ENCODE measurements at regions of chr18 and their contacts with region 1.

Region 1: DNA sequence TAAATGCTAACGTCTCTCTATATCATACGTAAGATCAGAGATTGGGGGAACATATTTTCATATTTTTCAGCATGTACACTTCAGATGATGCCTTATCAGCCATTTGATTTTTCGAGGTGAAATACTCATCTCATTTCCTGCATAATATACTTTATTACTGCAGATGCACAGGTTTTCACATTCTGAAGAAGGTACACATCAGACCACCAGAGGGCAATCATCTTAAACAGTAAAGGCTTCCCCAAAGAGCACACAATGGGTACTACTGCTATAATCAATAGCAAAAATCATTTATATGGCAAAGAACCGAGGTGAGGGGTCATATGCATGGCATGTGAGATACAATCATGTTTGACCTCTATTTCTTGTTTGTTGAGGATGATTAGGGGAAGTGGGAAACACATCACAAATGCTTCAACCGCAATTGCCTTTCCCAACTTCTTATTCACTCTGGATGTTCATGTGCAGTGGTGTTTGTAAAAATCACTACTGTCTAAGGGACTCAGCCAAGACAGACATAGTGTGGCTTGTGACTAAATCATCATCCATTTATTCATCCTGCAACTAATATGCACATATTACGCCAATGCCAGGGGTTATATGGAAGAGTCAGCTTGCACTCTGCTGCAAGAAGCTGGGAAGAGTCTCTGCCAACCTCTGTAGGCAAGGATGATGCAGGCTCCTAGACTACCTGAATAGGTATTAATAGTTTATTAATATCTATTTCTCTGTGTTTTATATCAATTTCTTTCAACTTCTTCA is 118.7 kb downstream of the EPB41L3 start:
- DNase-seq: peak; percentile 49
- H3K4me3 ChIP-seq: no peak overlapping the region
- H3K27ac ChIP-seq: no peak overlapping the region
- H3K4me1 ChIP-seq: no peaks in the 10 kb centered on the region
- H3K27me3 ChIP-seq: peaks cover 26% of the 10 kb centered on the region
- CTCF ChIP-seq: peak; percentile 66

Region 2: DNA sequence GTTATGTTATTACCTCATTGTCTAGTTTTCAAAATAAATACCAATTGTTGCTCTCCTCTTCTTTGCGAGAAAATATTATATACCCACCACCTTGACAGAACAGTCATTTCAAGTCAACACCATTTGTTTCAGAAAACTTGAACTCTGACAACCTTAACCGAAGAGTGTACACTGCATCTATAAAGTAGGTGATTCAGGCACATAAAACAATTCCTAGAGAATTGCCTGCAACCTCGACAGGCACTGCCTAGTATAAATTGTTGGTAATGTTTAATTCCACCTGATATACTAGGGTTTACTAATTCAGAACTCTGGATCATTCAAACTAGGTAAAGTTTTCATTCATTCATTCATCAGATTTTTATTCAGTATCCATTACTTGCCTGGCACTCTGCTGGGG is 349.8 kb before region 1 on chr18:
- CTCF ChIA-PET with region 1: no interaction called
- POLR2A ChIA-PET with region 1: no interaction called
- intact Hi-C with region 1: no loop called
- DNase-seq: no peak
- H3K4me3 ChIP-seq: no peak overlapping the region
- H3K27ac ChIP-seq: no peak overlapping the region
- H3K4me1 ChIP-seq: no peaks in the 10 kb centered on the region
- H3K27me3 ChIP-seq: peaks cover 11% of the 10 kb centered on the region
- CTCF ChIP-seq: no peak

Region 3: GRCh38 chr18:5546660-5547059 is 121.6 kb after region 1 on chr18:
- CTCF ChIA-PET with region 1: no interaction called
- POLR2A ChIA-PET with region 1: no interaction called
- intact Hi-C with region 1: loop called (anchors 10 kb)
- DNase-seq: peak; percentile 33
- H3K4me3 ChIP-seq: no peak overlapping the region
- H3K27ac ChIP-seq: no peak overlapping the region
- H3K4me1 ChIP-seq: peaks cover 5% of the 10 kb centered on the region
- H3K27me3 ChIP-seq: peaks cover 89% of the 10 kb centered on the region
- CTCF ChIP-seq: peak; percentile 49

Region 4: GRCh38 chr18:5851998-5852397 is 426.9 kb after region 1 on chr18:
- CTCF ChIA-PET with region 1: no interaction called
- POLR2A ChIA-PET with region 1: no interaction called
- intact Hi-C with region 1: no loop called
- DNase-seq: no peak
- H3K4me3 ChIP-seq: no peak overlapping the region
- H3K27ac ChIP-seq: no peak overlapping the region
- H3K4me1 ChIP-seq: no peaks in the 10 kb centered on the region
- H3K27me3 ChIP-seq: no peaks in the 10 kb centered on the region
- CTCF ChIP-seq: 0 out of 2 replicates have a peak, but pooled peaks have one; percentile 13

Measured in A673 (cell line).